Activated CD8-positive, alpha-beta memory T cell treated with anti-CD3 and anti-CD28 coated beads, Interleukin-2, amount 10 ng/mL, durations not matched to agents 7 days and 5 days (primary cell): ENCODE measurements at regions of chr10 and their contacts with region 1.

Region 1: GRCh38 chr10:71569775-71570588 is 149.6 kb downstream of the C10orf105 start:
- DNase-seq: peak; percentile 83
- ATAC-seq: peak; percentile 62
- H3K4me3 Mint-ChIP-seq: no peak overlapping the region
- H3K27ac Mint-ChIP-seq: no peak overlapping the region
- H3K4me1 Mint-ChIP-seq: no peaks in the 10 kb centered on the region
- H3K27me3 Mint-ChIP-seq: peaks cover 1% of the 10 kb centered on the region

Region 2: DNA sequence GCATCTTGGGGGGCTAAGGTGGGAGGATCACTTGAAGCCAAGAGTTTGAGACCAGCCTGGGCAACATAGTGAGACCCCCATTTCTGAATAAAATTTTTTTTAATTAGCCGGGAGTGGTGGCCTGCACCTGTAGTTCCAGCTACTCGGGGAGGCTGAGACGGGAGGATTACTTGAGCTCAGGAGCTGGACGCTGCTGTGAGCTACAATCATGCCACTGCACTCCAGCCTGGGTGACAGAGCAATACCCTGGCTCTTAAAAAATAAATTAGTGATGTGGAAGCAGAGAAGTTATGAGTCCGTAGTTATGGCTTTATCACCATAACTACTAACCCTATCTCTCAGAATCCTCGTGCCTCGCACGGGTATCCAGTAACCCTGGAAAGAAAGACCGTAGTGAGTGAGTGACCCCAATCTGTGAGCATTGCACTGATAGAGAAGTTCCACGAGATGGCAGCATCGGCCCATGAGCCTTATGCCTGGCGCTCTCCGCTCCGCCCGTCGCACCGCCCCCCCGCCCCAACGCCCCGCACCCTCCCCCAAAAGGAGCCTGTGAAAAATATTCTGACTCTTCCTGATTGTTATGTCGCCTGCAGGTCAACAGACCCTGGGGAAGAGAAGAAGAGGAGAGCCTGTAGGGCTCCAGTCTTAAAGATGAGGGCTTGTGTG is 255.8 kb before region 1 on chr10:
- CTCF ChIA-PET with region 1: interaction called, 55 read pairs
- DNase-seq: peak; percentile 59
- ATAC-seq: peak; percentile 37
- H3K4me3 Mint-ChIP-seq: no peak overlapping the region
- H3K27ac Mint-ChIP-seq: no peak overlapping the region
- H3K4me1 Mint-ChIP-seq: peaks cover 19% of the 10 kb centered on the region
- H3K27me3 Mint-ChIP-seq: peaks cover 18% of the 10 kb centered on the region

Region 3: GRCh38 chr10:71383972-71384687 is 185.9 kb before region 1 on chr10:
- CTCF ChIA-PET with region 1: interaction called, 33 read pairs
- DNase-seq: peak; percentile 79
- ATAC-seq: peak; percentile 87
- H3K4me3 Mint-ChIP-seq: no peak overlapping the region
- H3K27ac Mint-ChIP-seq: no peak overlapping the region
- H3K4me1 Mint-ChIP-seq: no peaks in the 10 kb centered on the region
- H3K27me3 Mint-ChIP-seq: peaks cover 14% of the 10 kb centered on the region

Region 4: DNA sequence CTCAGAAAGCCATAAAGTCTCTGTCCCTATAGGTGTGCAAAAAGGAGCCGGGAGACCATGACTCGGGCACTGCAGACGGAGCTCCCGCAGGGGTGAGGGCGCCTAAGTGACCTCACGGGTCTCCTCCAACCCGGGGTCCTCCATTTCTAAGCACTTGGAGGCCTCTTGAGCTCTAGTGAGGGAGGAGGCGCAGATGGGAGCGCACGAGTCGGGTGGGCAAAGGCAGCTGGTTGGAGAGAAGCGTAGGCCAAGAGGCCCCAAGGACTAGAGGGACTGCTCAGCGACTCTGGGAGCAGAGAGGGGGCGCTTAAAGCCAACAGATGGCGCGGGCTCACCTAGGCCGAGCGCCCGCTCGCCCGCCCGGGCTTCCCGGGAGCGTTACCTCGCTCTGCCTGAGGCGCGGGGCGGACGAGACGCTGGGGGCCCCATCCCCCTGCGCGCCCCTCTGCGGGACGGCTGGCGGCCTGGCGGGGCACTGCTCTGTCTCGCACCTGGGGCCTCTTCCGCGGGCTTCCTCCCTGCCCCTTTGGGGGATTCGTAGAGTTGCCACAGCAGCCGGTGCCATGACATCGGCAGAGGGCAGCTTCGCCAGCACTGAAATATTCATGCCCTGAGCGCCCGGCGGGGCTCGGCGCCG is 173.8 kb before region 1 on chr10:
- CTCF ChIA-PET with region 1: interaction called, 25 read pairs
- DNase-seq: peak; percentile 43
- ATAC-seq: peak; percentile 68
- H3K4me3 Mint-ChIP-seq: no peak overlapping the region
- H3K27ac Mint-ChIP-seq: no peak overlapping the region
- H3K4me1 Mint-ChIP-seq: no peaks in the 10 kb centered on the region
- H3K27me3 Mint-ChIP-seq: peaks cover 58% of the 10 kb centered on the region

Region 5: GRCh38 chr10:71547876-71548846 is 21.8 kb before region 1 on chr10:
- CTCF ChIA-PET with region 1: interaction called, 17 read pairs
- DNase-seq: peak; percentile 56
- ATAC-seq: peak; percentile 86
- H3K4me3 Mint-ChIP-seq: no peak overlapping the region
- H3K27ac Mint-ChIP-seq: no peak overlapping the region
- H3K4me1 Mint-ChIP-seq: no peaks in the 10 kb centered on the region
- H3K27me3 Mint-ChIP-seq: no peaks in the 10 kb centered on the region